ENCODE measurements at regions of chr3 and their contacts with region 1.

Region 1: DNA sequence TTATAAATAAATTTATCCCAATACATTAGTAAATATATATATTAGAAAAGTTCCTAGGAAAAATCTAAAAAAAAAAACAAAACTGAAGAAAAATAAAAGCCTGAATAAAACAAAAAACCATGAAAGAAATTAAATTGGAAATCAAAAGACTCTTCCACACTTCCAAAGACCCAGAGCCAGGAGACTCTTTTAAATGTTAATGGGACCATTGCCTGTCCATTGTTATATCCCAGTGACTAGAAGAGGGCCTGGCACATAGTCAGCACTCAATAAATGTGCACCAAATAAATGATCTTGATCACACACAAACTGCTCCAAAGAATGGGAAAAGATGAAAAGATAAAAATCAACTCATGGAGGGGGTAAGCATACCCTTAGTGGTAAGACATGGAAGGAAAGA is 51.3 kb upstream of the CLDN18 start:
- DNase-seq: no peak
- H3K4me3 ChIP-seq: no peak overlapping the region
- H3K27ac ChIP-seq: no peak overlapping the region
- H3K4me1 ChIP-seq: no peaks in the 10 kb centered on the region
- H3K27me3 ChIP-seq: peaks cover 7% of the 10 kb centered on the region
- CTCF ChIP-seq: no peak

Region 2: DNA sequence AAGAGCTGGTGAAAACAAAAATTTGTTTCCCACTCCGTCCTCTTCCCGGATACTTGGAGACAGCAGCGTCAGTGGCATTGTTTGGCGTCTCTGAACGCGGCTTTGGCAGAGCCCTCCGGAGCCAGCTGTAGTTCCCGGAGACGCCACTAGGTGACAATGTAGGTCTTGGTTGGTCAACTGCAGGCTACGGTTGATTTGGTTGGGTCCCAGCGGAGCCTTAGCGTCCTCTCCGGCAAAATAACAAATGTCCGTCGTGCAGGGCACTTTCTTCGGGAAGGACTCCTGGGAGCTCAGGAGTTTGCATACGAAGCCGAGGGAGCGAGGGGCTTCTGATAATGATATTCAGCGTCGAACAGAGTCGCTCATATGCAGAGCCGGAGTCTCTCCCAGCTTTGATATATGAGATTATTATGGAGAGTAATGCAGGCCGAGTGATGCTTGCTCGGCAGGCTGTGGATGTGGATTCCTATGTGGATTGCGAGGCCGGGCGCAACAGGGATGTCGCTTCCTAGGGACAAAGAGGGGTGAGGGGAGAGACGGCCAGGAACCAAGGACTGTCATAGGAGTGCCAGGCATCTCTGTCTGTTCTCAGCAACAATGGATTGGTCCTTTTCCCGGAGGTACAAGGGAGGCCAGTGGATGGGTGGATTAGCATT is 926.0 kb before region 1 on chr3:
- intact Hi-C with region 1: loop called (anchors 10 kb)
- DNase-seq: peak; percentile 88
- H3K4me3 ChIP-seq: peak overlapping the region; percentile 63
- H3K27ac ChIP-seq: no peak overlapping the region
- H3K4me1 ChIP-seq: peaks cover 6% of the 10 kb centered on the region
- H3K27me3 ChIP-seq: peaks cover 38% of the 10 kb centered on the region
- CTCF ChIP-seq: peak; percentile 99

Region 3: DNA sequence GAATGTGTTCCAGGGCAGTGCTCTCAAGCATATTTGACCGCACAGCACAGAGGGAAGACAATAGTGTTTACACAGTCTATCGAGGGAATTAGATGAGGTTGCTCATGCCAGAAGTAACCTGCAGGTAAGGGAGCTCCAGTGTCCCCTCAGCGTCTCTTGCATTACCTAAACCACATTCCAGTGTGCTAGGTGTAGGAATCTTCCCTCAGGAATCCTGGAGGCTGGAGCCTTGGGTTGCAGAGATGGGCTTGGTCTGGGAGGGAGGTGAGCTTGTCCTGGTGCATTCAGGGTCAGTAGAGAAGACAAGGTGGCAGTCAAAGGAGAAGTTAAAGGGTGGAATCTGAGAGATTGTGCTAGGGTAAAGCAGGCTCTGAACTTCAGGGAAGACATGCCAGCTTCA is 138.3 kb before region 1 on chr3:
- intact Hi-C with region 1: no loop called
- DNase-seq: no peak
- H3K4me3 ChIP-seq: no peak overlapping the region
- H3K27ac ChIP-seq: no peak overlapping the region
- H3K4me1 ChIP-seq: no peaks in the 10 kb centered on the region
- H3K27me3 ChIP-seq: peaks cover 36% of the 10 kb centered on the region
- CTCF ChIP-seq: no peak

Region 4: GRCh38 chr3:138125548-138126221 is 167.1 kb after region 1 on chr3:
- intact Hi-C with region 1: no loop called
- DNase-seq: no peak
- H3K4me3 ChIP-seq: no peak overlapping the region
- H3K27ac ChIP-seq: peak overlapping the region; percentile 50
- H3K4me1 ChIP-seq: peaks cover 9% of the 10 kb centered on the region
- H3K27me3 ChIP-seq: no peaks in the 10 kb centered on the region
- CTCF ChIP-seq: no peak